Mammary epithelial cell (primary cell): ENCODE measurements at regions of chr4 and their contacts with region 1.

Region 1: DNA sequence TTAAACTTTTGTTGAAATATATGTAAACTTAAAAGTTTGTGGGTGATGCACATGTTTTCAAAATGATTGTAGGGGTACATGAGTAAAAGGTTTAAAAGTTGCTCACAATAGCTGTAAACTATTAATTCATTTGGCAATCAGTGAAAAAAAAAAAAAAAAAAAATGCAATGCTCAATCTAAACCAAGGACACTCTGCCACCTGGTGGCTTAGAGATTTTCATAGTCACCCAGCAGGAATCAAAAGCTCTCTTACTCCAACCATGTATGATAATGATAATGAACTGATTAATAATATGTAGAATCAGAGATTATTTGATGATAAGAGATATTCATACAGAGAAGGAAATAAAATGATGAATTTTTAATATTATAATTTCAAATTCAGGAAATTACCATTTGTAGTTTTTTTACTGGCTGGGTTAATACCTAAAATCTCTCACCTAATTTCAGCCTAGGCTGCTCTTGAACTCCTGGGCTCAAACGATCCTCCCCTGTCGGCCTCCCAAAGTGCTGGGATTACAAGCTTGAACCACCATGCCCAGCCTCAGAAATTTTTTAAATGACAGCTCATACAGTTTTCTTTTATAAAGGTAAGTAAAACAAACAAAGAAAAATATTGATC is 46.9 kb upstream of the SLC25A4 start:
- DNase-seq: peak; percentile 16
- H3K4me3 ChIP-seq: no peak overlapping the region
- H3K27ac ChIP-seq: no peak overlapping the region
- H3K4me1 ChIP-seq: no peaks in the 10 kb centered on the region
- H3K27me3 ChIP-seq: no peaks in the 10 kb centered on the region
- CTCF ChIP-seq: peak; percentile 41 to 62

Region 2: GRCh38 chr4:185005216-185005819 is 90.8 kb before region 1 on chr4:
- CTCF ChIA-PET with region 1: interaction called, 7 read pairs
- dilution Hi-C with region 1: no loop called
- in situ Hi-C with region 1: no loop called
- intact Hi-C with region 1: loop called (anchors 1 kb)
- DNase-seq: peak; percentile 63
- H3K4me3 ChIP-seq: peak overlapping the region in 1 of 3 experiments; percentile 27
- H3K27ac ChIP-seq: no peak overlapping the region
- H3K4me1 ChIP-seq: peaks cover 5% of the 10 kb centered on the region
- H3K27me3 ChIP-seq: peaks cover 4% of the 10 kb centered on the region
- CTCF ChIP-seq: peak; percentile 84 to 95

Region 3: DNA sequence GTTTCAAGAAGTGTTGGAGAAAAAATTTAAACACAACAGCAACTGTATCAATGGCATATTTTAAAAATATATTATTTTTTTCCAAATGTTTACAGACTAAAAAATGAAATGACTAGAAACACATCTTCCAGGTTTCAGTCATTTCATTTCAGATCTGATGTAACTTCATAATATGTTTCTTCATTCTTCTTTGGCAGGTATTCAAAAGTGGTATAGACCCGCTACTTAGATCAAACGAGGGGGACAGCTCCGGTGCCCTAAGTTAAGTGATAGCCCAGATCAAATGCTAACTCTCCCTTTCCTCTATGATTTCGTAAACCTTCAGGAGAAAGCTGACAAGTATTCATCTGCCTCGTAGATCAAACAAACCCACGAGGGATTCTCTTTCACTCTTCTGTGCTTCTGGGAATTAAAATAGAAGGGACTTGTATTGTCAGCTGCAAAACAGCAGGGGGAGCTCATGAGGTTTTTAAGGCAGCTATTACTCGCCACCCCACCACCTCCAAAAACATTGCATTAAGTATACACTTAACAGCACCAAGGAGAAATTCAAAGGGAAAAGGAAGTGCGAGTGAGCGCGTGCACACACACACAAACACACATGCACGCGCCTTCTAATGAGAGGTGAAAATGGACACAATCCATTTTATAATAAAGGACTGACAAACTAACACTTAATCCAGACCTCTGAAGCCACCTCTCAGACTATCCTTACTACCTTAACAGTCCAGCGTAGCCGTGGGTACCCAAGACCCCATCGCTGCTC is 56.5 kb before region 1 on chr4:
- CTCF ChIA-PET with region 1: interaction called, 11 read pairs
- dilution Hi-C with region 1: no loop called
- in situ Hi-C with region 1: no loop called
- intact Hi-C with region 1: loop called (anchors 1 kb)
- DNase-seq: peak; percentile 35
- H3K4me3 ChIP-seq: peak overlapping the region; percentile 31 to 42 (median 32)
- H3K27ac ChIP-seq: no peak overlapping the region
- H3K4me1 ChIP-seq: no peaks in the 10 kb centered on the region
- H3K27me3 ChIP-seq: no peaks in the 10 kb centered on the region
- CTCF ChIP-seq: peak; percentile 71 to 78

Region 4: DNA sequence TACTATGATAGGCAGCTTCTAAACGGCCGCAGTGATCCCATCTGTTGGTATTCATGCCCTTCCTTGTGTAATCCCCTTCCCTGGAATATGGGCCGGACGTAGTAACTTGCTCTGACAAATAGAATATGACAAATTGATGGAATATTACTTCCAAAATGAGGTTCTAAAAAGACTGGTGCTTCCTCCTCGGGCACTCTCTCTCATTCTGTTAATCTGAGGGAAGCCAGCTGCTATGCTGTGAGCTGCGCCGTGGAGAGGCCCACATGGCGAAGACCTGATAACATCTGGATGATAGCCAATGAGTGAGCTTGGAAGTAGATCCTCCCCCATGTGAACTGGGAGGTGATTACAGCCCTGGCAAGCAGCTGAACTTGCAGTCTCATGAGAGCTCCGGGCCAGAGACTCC is 19.7 kb after region 1 on chr4:
- CTCF ChIA-PET with region 1: interaction called, 3 read pairs
- dilution Hi-C with region 1: no loop called
- in situ Hi-C with region 1: no loop called
- intact Hi-C with region 1: loop called (anchors 1 kb)
- DNase-seq: no peak
- H3K4me3 ChIP-seq: no peak overlapping the region
- H3K27ac ChIP-seq: no peak overlapping the region
- H3K4me1 ChIP-seq: peaks cover 8% of the 10 kb centered on the region
- H3K27me3 ChIP-seq: no peaks in the 10 kb centered on the region
- CTCF ChIP-seq: no peak

Region 5: DNA sequence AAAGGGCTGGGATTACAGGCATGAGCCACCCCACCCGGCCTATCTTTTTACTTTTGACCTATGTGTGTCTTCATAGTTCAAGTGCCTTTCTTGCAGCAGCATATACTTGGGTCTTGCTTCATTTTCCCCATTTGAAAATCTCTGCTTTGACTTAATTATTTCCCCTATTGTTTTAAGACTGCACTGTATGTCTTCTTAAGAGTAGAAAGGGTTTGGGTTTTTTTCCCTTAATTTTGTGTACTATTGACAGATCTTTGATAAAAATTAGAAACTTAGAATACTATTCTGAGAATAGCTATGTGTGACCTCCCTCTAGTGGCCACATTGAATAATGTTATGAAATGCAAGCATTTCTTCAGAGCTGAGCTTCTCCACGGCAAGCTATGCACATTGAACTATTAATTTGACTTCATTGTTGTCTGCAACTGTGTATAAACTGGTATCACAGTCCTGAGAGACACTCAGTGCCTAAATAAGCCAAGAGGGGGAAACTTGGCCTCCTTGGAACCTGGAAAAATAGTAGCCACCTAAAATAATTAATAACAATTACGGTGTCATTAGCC is 38.2 kb after region 1 on chr4:
- CTCF ChIA-PET with region 1: interaction called, 3 read pairs
- dilution Hi-C with region 1: no loop called
- in situ Hi-C with region 1: no loop called
- intact Hi-C with region 1: loop called (anchors 2 kb)
- DNase-seq: peak; percentile 35
- H3K4me3 ChIP-seq: no peak overlapping the region
- H3K27ac ChIP-seq: no peak overlapping the region
- H3K4me1 ChIP-seq: no peaks in the 10 kb centered on the region
- H3K27me3 ChIP-seq: no peaks in the 10 kb centered on the region
- CTCF ChIP-seq: peak; percentile 63 to 76

Region 6: DNA sequence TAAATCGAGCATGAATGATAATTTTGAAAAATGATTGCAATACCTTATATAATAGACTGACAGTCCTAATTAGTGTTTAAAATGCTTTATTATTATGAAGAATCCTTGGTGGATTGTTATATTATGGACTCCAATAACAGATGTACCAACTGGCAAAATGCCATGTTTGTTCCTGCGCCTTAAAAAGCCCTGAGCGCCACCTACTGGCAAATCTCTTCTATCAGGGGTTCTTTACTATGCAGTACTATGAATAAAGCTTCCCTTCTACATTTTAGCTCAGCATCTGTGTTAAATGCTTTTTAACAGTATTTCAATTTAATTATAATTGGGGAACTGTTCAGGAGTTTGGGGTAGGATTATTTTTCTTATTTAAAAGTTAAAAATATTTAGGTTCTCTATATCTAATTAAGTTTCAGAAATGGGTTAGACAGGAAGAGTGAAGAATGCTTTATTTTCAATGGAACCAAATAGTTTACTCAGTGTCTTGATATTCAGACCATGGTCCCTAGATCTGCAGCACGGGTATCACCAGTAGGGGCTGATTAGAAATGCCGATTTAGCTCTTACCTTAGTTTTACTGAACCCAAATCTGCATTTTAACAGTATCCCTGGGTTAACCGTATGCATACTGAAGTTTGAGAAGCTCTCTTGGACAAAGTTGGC is 87.6 kb after region 1 on chr4:
- CTCF ChIA-PET with region 1: interaction called, 13 read pairs
- dilution Hi-C with region 1: no loop called
- in situ Hi-C with region 1: no loop called
- intact Hi-C with region 1: loop called (anchors 5 kb)
- DNase-seq: peak; percentile 66
- H3K4me3 ChIP-seq: no peak overlapping the region
- H3K27ac ChIP-seq: no peak overlapping the region
- H3K4me1 ChIP-seq: no peaks in the 10 kb centered on the region
- H3K27me3 ChIP-seq: no peaks in the 10 kb centered on the region
- CTCF ChIP-seq: peak; percentile 80 to 85

Region 7: DNA sequence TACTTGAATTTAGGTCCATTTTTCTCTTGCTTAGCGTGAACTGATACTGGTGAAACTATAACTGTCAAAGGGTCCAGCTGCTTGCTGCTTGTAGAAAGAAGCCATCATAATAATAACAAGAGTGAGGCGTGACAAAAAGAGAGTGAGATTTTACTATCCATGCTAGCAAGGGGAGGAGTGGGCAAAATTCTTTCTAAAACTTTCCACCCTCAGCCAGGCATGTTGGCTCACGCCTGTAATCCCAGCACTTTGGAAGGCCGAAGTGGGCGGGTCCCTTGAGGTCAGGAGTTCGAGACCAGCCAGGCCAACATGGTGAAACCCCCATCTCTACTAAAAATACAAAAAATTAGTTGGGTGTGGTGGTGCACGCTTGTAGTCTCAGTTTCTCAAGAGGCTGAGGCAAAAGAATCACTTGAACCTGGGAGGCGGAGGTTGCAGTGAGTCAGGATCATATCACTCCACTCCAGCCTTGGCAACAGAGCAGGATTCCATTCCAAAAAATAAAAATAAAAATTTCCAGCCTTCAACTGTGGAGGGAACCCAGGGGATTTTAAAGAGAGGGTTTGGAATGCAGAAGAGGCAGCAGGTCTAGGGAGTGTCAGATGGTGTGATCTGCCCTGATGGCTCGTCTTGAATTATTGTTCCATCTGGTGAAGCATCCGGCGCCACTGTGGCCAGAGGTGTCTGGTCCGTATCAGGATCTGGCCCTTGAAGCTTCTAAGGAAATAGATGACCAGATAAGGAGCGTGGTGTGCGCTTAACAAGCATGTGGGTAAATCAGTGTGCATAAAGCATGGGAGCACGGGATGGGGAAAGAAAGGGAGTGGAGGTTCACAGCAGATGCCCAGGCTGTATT is 247.8 kb after region 1 on chr4:
- CTCF ChIA-PET with region 1: no interaction called
- dilution Hi-C with region 1: no loop called
- in situ Hi-C with region 1: no loop called
- intact Hi-C with region 1: no loop called
- DNase-seq: peak; percentile 5
- H3K4me3 ChIP-seq: no peak overlapping the region
- H3K27ac ChIP-seq: peak overlapping the region; percentile 7
- H3K4me1 ChIP-seq: peaks cover 6% of the 10 kb centered on the region
- H3K27me3 ChIP-seq: no peaks in the 10 kb centered on the region
- CTCF ChIP-seq: no peak